ENCODE measurements at regions of chr9 and their contacts with region 1.

Region 1: GRCh38 chr9:95127249-95128176 is 190.0 kb downstream of the FANCC start:
- DNase-seq: peak; percentile 91

Region 2: GRCh38 chr9:94681508-94681907 is 446.0 kb before region 1 on chr9:
- intact Hi-C with region 1: loop called (anchors 2 kb)
- DNase-seq: peak; percentile 87